Posterior vena cava (tissue), 2 donors: ENCODE measurements at regions of chr19 and their contacts with region 1.

Region 1: GRCh38 chr19:10112895-10113591 is 1.6 kb downstream of the P2RY11 start:
- DNase-seq: peak; percentile 87

Region 2: DNA sequence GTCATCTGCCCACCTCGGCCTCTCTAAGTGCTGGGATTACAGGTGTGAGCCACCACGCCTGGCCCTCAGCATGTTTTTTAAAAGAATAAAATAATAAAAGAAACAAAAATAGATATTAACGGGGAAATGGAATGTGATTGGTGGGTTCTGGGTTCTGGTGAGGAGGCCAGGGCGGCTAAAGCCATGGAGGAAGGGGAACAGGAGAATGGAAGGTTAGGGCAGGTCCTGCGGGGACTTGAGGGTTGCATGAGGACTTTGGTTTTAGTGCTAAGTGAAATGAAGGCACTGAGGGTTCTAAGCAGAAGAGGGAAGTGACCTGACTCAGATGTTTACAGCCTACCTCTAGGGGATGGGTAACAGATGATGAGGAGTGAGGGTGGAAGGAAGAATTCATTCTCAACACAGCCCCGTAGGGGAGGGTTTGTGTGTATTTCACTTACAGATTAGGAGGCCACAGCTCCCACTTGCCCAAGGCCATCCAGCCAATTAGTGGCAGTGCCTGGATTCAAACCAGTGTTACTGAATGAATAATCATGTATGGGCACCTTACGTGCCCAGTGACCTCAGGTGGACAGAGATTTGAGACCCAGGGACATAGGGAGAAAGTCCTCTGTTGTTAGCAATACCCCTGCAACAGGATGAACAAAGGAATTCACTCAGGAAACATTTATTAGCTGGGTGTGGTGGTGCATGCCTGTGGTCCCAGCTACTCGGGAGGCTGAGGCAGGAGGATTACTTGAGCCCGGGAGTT is 132.3 kb after region 1 on chr19:
- intact Hi-C with region 1: loop called (anchors 10 kb)
- DNase-seq: no peak

Region 3: GRCh38 chr19:11663181-11663591 is 1550.1 kb after region 1 on chr19:
- intact Hi-C with region 1: no loop called
- DNase-seq: no peak